WTC11 (cell line): ENCODE measurements at regions of chr1 and their contacts with region 1.

Region 1: GRCh38 chr1:19067182-19067911 is 110.9 kb upstream of the IFFO2 start:
- DNase-seq: no peak
- ATAC-seq: peak; percentile 46
- H3K4me3 Mint-ChIP-seq: no peak overlapping the region
- H3K27ac Mint-ChIP-seq: no peak overlapping the region
- H3K4me1 Mint-ChIP-seq: peaks cover 3% of the 10 kb centered on the region; the same call in 1 of the 2 replicates
- H3K27me3 Mint-ChIP-seq: no peaks in the 10 kb centered on the region; the same call in 1 of the 2 replicates
- CTCF ChIP-seq: no peak

Region 2: GRCh38 chr1:18883636-18884418 is 183.5 kb before region 1 on chr1:
- CTCF ChIA-PET with region 1: interaction called, 14 read pairs
- POLR2A ChIA-PET with region 1: no interaction called
- DNase-seq: peak; percentile 90
- ATAC-seq: peak; percentile 92
- H3K4me3 Mint-ChIP-seq: no peak overlapping the region
- H3K27ac Mint-ChIP-seq: no peak overlapping the region
- H3K4me1 Mint-ChIP-seq: no peaks in the 10 kb centered on the region; the same call in 1 of the 2 replicates
- H3K27me3 Mint-ChIP-seq: no peaks in the 10 kb centered on the region
- CTCF ChIP-seq: peak; percentile 85

Region 3: GRCh38 chr1:19151537-19151936 is 84.2 kb after region 1 on chr1:
- CTCF ChIA-PET with region 1: no interaction called
- POLR2A ChIA-PET with region 1: no interaction called
- DNase-seq: no peak
- ATAC-seq: no peak
- H3K4me3 Mint-ChIP-seq: no peak overlapping the region
- H3K27ac Mint-ChIP-seq: no peak overlapping the region
- H3K4me1 Mint-ChIP-seq: no peaks in the 10 kb centered on the region
- H3K27me3 Mint-ChIP-seq: no peaks in the 10 kb centered on the region
- CTCF ChIP-seq: no peak